ENCODE measurements at regions of chr3 and their contacts with region 1.

Region 1: GRCh38 chr3:98259707-98260106 is 4.3 kb upstream of the OR5H6 start:
- DNase-seq: peak in 1 of 2 experiments; percentile 73
- H3K4me3 ChIP-seq: no peak overlapping the region
- H3K27ac ChIP-seq: no peak overlapping the region
- H3K4me1 ChIP-seq: peaks cover 0 to 3% (median 1%) of the 10 kb centered on the region in 4 experiments; a peak in 2 of 7 replicates
- H3K27me3 ChIP-seq: peaks cover 0 to 1% (median 0%) of the 10 kb centered on the region in 4 experiments; a peak in 1 of 7 replicates
- CTCF ChIP-seq: peak; percentile 28 to 67 (median 48); a peak in 3 of 4 replicates
- EP300 ChIP-seq: no peak
- POLR2A ChIP-seq: no peak
- RAD21 ChIP-seq: peak; percentile 23 to 44; a peak in 2 of 4 replicates

Region 2: DNA sequence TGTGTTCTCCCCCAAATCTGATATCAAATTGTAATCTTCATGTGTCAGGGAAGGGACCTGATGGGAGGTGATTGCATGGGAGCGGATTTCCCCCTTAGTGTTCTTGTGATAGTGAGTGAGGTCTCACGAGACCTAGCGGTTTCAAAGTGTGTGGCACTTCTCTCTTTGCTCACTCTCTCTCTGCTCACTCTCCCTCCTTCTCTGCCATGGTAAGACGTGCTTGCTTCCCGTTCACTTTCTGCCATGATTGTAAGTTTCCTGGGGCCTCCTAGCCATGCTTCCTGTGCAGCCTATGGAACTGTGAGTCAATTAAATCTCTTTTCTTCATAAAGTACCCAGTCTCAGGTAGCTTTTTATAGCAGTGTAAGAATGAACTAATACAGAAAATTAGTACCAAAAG is 26.2 kb before region 1 on chr3:
- CTCF ChIA-PET with region 1: no interaction called
- POLR2A ChIA-PET with region 1: no interaction called
- DNase-seq: no peak
- H3K4me3 ChIP-seq: no peak overlapping the region
- H3K27ac ChIP-seq: no peak overlapping the region
- H3K4me1 ChIP-seq: no peaks in the 10 kb centered on the region
- H3K27me3 ChIP-seq: no peaks in the 10 kb centered on the region
- CTCF ChIP-seq: no peak
- EP300 ChIP-seq: no peak
- POLR2A ChIP-seq: no peak
- RAD21 ChIP-seq: no peak

Region 3: GRCh38 chr3:98246142-98246541 is 13.6 kb before region 1 on chr3:
- CTCF ChIA-PET with region 1: interaction called, 13 read pairs
- POLR2A ChIA-PET with region 1: no interaction called
- DNase-seq: no peak
- H3K4me3 ChIP-seq: no peak overlapping the region
- H3K27ac ChIP-seq: no peak overlapping the region
- H3K4me1 ChIP-seq: peaks cover 0 to 4% (median 0%) of the 10 kb centered on the region in 4 experiments; a peak in 4 of 7 replicates
- H3K27me3 ChIP-seq: no peaks in the 10 kb centered on the region
- CTCF ChIP-seq: no peak
- EP300 ChIP-seq: no peak
- POLR2A ChIP-seq: no peak
- RAD21 ChIP-seq: no peak

Region 4: DNA sequence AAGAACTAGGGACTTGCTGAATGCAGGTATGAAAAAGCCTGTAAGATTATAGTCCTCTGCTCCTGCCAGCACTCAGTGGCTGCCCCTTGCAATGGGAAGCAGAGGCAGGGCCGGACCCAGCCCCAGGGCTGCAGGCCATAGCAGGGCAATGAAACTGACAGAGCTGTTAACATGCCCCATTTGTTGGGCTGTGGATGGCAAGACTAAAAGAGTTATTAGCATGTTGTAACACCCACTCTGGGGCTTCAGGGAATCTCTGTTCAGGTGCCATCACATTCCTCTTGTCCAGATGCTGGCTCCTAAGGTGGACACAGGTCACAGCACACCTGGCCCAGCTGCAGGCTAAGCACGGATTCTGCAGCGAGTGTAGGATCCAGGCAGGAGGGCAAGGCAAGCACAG is 15.2 kb after region 1 on chr3:
- CTCF ChIA-PET with region 1: interaction called, 18 read pairs
- POLR2A ChIA-PET with region 1: interaction called, 3 read pairs
- DNase-seq: no peak
- H3K4me3 ChIP-seq: no peak overlapping the region
- H3K27ac ChIP-seq: no peak overlapping the region
- H3K4me1 ChIP-seq: no peaks in the 10 kb centered on the region
- H3K27me3 ChIP-seq: peaks cover 0 to 1% (median 0%) of the 10 kb centered on the region in 4 experiments; a peak in 1 of 7 replicates
- CTCF ChIP-seq: no peak
- EP300 ChIP-seq: no peak
- POLR2A ChIP-seq: no peak
- RAD21 ChIP-seq: no peak

Measured in H1 (cell line).